ENCODE measurements at regions of chr12 and their contacts with region 1.

Region 1: DNA sequence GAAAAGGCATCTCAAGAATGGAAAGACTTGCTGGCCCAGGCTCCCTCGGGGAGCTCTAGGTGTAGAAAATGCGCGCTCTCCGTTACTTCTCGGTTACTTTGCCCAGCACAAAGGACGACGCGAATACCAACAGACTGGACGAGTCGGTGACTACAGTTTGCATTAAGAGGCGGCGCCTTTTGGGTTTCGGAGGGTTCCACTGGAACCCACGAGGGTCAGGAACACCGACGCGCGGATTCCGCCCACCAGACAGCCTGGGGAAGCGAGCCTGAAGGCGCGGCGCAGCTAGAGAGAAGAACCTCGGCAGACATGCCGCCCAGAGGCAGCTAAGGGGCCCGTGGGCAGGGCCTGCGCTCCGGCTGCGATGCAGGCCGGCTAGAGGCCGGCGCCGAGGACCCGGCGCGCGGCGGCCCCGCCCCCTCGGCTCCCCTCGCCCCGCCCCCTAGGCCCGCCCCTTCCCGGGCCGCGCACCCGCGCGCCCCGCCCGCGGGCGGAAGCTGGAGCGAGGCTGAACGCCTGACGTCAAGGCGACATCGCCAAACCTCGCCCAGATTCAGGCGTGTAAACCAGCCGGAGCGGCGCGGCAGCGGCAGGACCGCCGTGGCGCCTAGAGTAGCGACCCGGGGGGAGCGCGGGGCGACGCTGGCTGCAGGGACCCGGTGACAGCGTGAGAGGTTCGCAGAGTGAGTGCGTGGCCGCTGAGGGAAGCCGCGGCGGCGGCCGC is at the start of gene RAP1B:
- DNase-seq: peak; percentile 94
- H3K4me3 ChIP-seq: peak within 1 kb of the TSS; percentile 82 to 89 (median 84)
- H3K27ac ChIP-seq: peak within 1 kb of the TSS; percentile 97 to 99 (median 98)
- H3K4me1 ChIP-seq: peaks cover 33 to 44% (median 41%) of the 10 kb centered on the region in 4 donors
- H3K27me3 ChIP-seq: no peaks in the 10 kb centered on the region
- CTCF ChIP-seq: no peak
- EP300 ChIP-seq: no peak
- POLR2A ChIP-seq: peak; percentile 75
- total RNA-seq, gene RAP1B: 114 to 181 (median 149) TPM

Region 2: GRCh38 chr12:68358532-68359485 is 251.7 kb before region 1 on chr12:
- intact Hi-C with region 1: loop called (anchors 5 kb)
- DNase-seq: no peak
- H3K4me3 ChIP-seq: no peak overlapping the region
- H3K27ac ChIP-seq: no peak overlapping the region
- H3K4me1 ChIP-seq: peaks cover 11 to 26% (median 21%) of the 10 kb centered on the region in 4 donors
- H3K27me3 ChIP-seq: no peaks in the 10 kb centered on the region
- CTCF ChIP-seq: peak; percentile 51 to 68 (median 66)
- EP300 ChIP-seq: no peak
- POLR2A ChIP-seq: no peak

Region 3: GRCh38 chr12:68695454-68695853 is 84.9 kb after region 1 on chr12:
- intact Hi-C with region 1: no loop called
- DNase-seq: no peak
- H3K4me3 ChIP-seq: no peak overlapping the region
- H3K27ac ChIP-seq: no peak overlapping the region
- H3K4me1 ChIP-seq: no peaks in the 10 kb centered on the region
- H3K27me3 ChIP-seq: no peaks in the 10 kb centered on the region
- CTCF ChIP-seq: no peak
- EP300 ChIP-seq: no peak
- POLR2A ChIP-seq: no peak

Measured in esophagus muscularis mucosa (tissue), 4 donors.